B cell (primary cell): ENCODE measurements at regions of chr10 and their contacts with region 1.

Region 1: GRCh38 chr10:89029785-89030437 is 39.3 kb downstream of the FAS start:
- DNase-seq: peak; percentile 76
- ATAC-seq: peak; percentile 72
- H3K4me3 ChIP-seq: no peak overlapping the region
- H3K4me3 Mint-ChIP-seq: no peak overlapping the region
- H3K27ac ChIP-seq: no peak overlapping the region
- H3K27ac Mint-ChIP-seq: no peak overlapping the region
- H3K4me1 ChIP-seq: peaks cover 8% of the 10 kb centered on the region in 2 donors
- H3K4me1 Mint-ChIP-seq: peaks cover 12% of the 10 kb centered on the region
- H3K27me3 ChIP-seq: no peaks in the 10 kb centered on the region
- H3K27me3 Mint-ChIP-seq: no peaks in the 10 kb centered on the region
- CTCF ChIP-seq: peak; percentile 95

Region 2: GRCh38 chr10:88944813-88945212 is 85.1 kb before region 1 on chr10:
- CTCF ChIA-PET with region 1: interaction called, 15 read pairs
- POLR2A ChIA-PET with region 1: no interaction called
- intact Hi-C with region 1: no loop called
- DNase-seq: peak; percentile 32
- ATAC-seq: peak; percentile 24
- H3K4me3 ChIP-seq: no peak overlapping the region
- H3K4me3 Mint-ChIP-seq: no peak overlapping the region
- H3K27ac ChIP-seq: no peak overlapping the region
- H3K27ac Mint-ChIP-seq: no peak overlapping the region
- H3K4me1 ChIP-seq: peaks cover 10 to 11% of the 10 kb centered on the region in 2 donors
- H3K4me1 Mint-ChIP-seq: peaks cover 18% of the 10 kb centered on the region
- H3K27me3 ChIP-seq: no peaks in the 10 kb centered on the region
- H3K27me3 Mint-ChIP-seq: no peaks in the 10 kb centered on the region
- CTCF ChIP-seq: no peak

Region 3: DNA sequence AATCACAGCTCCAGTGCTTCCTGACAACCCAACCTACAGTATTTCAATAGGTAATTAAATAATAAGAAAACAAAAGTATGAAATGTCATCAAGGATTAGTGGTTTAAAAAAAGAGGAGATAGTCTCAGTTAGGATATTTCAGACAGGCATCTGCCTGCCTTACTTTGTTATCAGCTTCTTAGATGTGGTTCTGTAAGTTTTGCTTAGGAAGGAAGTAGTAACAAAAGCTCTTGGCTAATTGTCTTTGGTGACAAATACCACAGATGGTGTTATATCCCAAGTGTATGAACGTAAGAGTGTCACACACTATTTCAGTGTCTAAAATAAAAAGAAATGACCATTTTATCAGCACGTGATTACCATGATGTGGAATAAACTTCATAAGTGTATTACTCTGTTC is 67.6 kb before region 1 on chr10:
- CTCF ChIA-PET with region 1: no interaction called
- POLR2A ChIA-PET with region 1: no interaction called
- intact Hi-C with region 1: no loop called
- DNase-seq: no peak
- ATAC-seq: no peak
- H3K4me3 ChIP-seq: no peak overlapping the region
- H3K4me3 Mint-ChIP-seq: no peak overlapping the region
- H3K27ac ChIP-seq: no peak overlapping the region
- H3K27ac Mint-ChIP-seq: no peak overlapping the region
- H3K4me1 ChIP-seq: no peaks in the 10 kb centered on the region
- H3K4me1 Mint-ChIP-seq: no peaks in the 10 kb centered on the region
- H3K27me3 ChIP-seq: no peaks in the 10 kb centered on the region
- H3K27me3 Mint-ChIP-seq: no peaks in the 10 kb centered on the region
- CTCF ChIP-seq: no peak

Region 4: DNA sequence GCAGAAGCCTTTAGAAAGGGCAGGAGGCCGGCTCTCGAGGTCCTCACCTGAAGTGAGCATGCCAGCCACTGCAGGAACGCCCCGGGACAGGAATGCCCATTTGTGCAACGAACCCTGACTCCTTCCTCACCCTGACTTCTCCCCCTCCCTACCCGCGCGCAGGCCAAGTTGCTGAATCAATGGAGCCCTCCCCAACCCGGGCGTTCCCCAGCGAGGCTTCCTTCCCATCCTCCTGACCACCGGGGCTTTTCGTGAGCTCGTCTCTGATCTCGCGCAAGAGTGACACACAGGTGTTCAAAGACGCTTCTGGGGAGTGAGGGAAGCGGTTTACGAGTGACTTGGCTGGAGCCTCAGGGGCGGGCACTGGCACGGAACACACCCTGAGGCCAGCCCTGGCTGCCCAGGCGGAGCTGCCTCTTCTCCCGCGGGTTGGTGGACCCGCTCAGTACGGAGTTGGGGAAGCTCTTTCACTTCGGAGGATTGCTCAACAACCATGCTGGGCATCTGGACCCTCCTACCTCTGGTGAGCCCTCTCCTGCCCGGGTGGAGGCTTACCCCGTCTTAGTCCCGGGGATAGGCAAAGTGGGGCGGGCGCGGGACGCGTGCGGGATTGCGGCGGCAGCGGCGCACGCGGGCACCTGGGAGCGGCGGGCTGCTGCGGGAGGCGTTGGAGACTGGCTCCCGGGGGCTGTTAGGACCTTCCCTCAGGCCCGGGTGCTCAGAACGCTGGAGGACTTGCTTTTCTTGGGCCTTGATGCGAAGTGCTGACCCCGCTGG is 39.3 kb before region 1 on chr10 and contains the start of gene FAS:
- CTCF ChIA-PET with region 1: interaction called, 7 read pairs
- POLR2A ChIA-PET with region 1: interaction called, 4 read pairs
- intact Hi-C with region 1: loop called (anchors 5 kb)
- DNase-seq: peak; percentile 87
- ATAC-seq: peak; percentile 65
- H3K4me3 ChIP-seq: peak within 1 kb of the TSS; percentile 73 to 95 (median 86)
- H3K4me3 Mint-ChIP-seq: peak within 1 kb of the TSS; percentile 98
- H3K27ac ChIP-seq: peak within 1 kb of the TSS; percentile 63 to 80
- H3K27ac Mint-ChIP-seq: peak within 1 kb of the TSS; percentile 83
- H3K4me1 ChIP-seq: peaks cover 17 to 25% of the 10 kb centered on the region in 2 donors
- H3K4me1 Mint-ChIP-seq: peaks cover 43% of the 10 kb centered on the region
- H3K27me3 ChIP-seq: no peaks in the 10 kb centered on the region
- H3K27me3 Mint-ChIP-seq: no peaks in the 10 kb centered on the region
- CTCF ChIP-seq: peak; percentile 7
- total RNA-seq, gene FAS: 11.5 and 13.7 TPM in 2 replicates

Region 5: DNA sequence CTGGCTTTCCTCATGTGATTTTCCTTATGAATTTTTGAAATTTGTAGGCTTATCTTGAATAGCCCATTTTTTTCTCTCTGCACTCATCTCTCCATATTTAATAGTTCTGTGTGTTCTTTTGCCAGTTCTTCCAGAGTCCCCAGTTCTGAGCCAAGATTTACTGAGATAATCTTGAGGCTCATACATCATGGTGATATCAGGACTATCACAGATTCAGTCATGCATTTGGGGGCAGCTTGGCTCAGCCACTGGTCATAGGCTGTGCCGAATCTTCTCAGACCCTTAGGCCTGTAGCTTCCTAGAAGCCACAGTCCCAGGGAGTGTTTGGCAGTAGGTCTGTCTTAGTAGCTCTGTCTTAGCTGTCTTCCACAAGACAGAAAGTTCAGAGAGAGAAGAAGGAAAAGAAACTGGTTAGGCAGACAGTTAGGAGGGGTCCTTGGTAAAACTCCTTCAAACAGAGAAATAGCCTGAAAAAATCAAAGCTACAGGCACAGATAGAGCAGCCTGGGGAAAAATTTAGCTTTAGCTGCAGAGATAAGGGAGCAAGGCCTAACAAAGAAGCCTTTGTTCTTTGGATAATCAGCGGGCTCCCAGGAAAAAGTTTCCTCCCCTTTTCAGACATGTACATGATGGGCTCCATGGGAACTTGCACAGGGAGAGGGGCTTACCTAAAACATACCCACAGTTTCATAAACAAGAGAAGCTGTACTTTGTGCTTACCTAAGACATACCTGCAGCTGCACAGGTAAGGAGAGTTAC is 10.2 kb before region 1 on chr10:
- CTCF ChIA-PET with region 1: interaction called, 18 read pairs
- POLR2A ChIA-PET with region 1: no interaction called
- intact Hi-C with region 1: no loop called
- DNase-seq: no peak
- ATAC-seq: no peak
- H3K4me3 ChIP-seq: no peak overlapping the region
- H3K4me3 Mint-ChIP-seq: no peak overlapping the region
- H3K27ac ChIP-seq: no peak overlapping the region
- H3K27ac Mint-ChIP-seq: no peak overlapping the region
- H3K4me1 ChIP-seq: no peaks in the 10 kb centered on the region
- H3K4me1 Mint-ChIP-seq: no peaks in the 10 kb centered on the region
- H3K27me3 ChIP-seq: no peaks in the 10 kb centered on the region
- H3K27me3 Mint-ChIP-seq: no peaks in the 10 kb centered on the region
- CTCF ChIP-seq: no peak

Region 6: GRCh38 chr10:89207181-89207800 is 177.4 kb after region 1 on chr10 and contains the start of gene CH25H:
- CTCF ChIA-PET with region 1: interaction called, 67 read pairs
- POLR2A ChIA-PET with region 1: no interaction called
- intact Hi-C with region 1: no loop called
- DNase-seq: peak; percentile 66
- ATAC-seq: peak; percentile 42
- H3K4me3 ChIP-seq: peak within 1 kb of the TSS; percentile 25 to 85 (median 62)
- H3K4me3 Mint-ChIP-seq: peak within 1 kb of the TSS; percentile 90
- H3K27ac ChIP-seq: no peak within 1 kb of the TSS
- H3K27ac Mint-ChIP-seq: peak within 1 kb of the TSS; percentile 7
- H3K4me1 ChIP-seq: peaks cover 32 to 34% of the 10 kb centered on the region in 2 donors
- H3K4me1 Mint-ChIP-seq: peaks cover 30% of the 10 kb centered on the region
- H3K27me3 ChIP-seq: peaks cover 0 to 59% (median 43%) of the 10 kb centered on the region in 4 experiments
- H3K27me3 Mint-ChIP-seq: peaks cover 48% of the 10 kb centered on the region
- CTCF ChIP-seq: no peak
- total RNA-seq, gene CH25H: not detected in 2 replicates

Region 7: DNA sequence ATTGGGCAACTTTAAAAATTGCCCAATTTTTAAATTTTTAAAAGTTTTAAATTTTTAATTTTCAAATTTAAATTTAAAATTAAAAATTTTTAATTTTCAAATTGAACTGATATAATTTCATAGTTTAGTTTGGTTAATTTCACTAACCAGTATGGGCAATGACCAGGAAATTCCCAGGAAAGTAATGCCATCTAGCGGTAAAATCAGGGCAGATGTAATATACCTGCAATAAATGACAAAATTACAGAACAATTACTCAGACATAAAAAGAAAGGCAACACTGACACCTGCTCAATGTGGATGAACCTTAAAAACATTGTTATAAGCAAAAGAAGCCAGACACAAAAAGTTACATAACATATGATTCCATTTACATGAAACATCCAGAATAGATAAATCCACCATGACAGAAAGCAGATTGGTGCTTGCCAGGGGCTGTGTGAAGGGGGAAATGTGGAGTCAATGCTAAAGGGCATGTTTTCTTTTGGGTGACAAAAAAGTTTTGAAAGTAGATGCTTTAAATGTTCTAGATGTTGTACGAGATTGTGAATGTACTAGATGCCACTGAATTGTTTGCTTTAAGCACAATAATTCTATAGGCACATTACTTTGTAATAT is 534.1 kb after region 1 on chr10:
- CTCF ChIA-PET with region 1: no interaction called
- POLR2A ChIA-PET with region 1: no interaction called
- intact Hi-C with region 1: loop called (anchors 10 kb)
- DNase-seq: peak; percentile 67
- ATAC-seq: peak; percentile 53
- H3K4me3 ChIP-seq: no peak overlapping the region
- H3K4me3 Mint-ChIP-seq: no peak overlapping the region
- H3K27ac ChIP-seq: no peak overlapping the region
- H3K27ac Mint-ChIP-seq: no peak overlapping the region
- H3K4me1 ChIP-seq: no peaks in the 10 kb centered on the region
- H3K4me1 Mint-ChIP-seq: no peaks in the 10 kb centered on the region
- H3K27me3 ChIP-seq: no peaks in the 10 kb centered on the region
- H3K27me3 Mint-ChIP-seq: peaks cover 9% of the 10 kb centered on the region
- CTCF ChIP-seq: peak; percentile 84